Activated T-helper 1 cell treated with anti-CD3 and anti-CD28 coated beads, Interleukin-12 subunit alpha, Interleukin-12 subunit beta, Interleukin-2, Interleukin-4 antibody, amounts not matched to agents 30 ng/mL and 10 ng/mL and 1 ng/mL, durations not matched to agents 14 hours and 24 hours and 36 hours (primary cell): ENCODE measurements at regions of chr20 and their contacts with region 1.

Region 1: DNA sequence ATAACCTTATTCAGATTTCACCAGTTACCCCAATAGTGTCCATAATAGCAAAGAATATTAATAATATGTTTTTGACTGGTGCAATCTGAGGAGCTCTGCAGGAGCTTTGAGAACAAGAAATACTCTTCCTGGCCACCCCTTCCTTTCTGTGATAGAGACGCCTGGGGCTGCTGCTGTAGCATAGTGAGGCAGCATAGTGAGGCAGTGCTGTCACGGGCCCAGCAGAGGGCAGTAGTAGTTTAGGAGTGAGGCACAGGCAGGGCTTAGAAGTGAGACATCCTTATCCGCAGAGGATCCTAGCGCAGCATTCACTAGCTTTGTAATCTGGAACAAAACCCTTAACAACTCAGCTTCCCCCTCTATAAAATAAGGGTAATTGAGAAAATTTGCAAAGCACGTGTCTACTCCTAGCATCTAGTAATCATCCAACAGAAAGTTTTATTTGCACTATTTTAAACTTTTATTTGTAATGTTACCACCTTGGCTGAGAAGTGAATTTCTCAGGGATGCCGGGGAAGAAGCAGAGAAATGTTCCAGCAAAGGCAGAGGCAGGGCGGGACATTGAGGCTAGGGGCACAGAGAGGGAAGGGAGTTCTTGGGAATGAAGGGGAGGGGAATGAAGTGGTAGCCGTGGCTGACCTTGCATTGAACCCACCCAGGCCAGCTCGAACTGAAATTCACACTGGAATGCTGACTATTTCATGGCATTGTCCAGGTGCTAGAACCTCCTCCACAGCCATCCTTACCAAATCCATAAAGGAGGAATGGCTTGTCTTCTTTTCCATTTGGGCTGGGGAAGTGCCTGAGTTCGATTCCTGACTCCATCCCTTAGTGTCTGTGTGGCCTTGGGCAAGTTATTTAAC is 78.8 kb downstream of the CDS2 start:
- DNase-seq: peak; percentile 57
- H3K4me3 Mint-ChIP-seq: no peak overlapping the region
- H3K27ac Mint-ChIP-seq: no peak overlapping the region
- H3K4me1 Mint-ChIP-seq: no peaks in the 10 kb centered on the region
- H3K27me3 Mint-ChIP-seq: no peaks in the 10 kb centered on the region

Region 2: DNA sequence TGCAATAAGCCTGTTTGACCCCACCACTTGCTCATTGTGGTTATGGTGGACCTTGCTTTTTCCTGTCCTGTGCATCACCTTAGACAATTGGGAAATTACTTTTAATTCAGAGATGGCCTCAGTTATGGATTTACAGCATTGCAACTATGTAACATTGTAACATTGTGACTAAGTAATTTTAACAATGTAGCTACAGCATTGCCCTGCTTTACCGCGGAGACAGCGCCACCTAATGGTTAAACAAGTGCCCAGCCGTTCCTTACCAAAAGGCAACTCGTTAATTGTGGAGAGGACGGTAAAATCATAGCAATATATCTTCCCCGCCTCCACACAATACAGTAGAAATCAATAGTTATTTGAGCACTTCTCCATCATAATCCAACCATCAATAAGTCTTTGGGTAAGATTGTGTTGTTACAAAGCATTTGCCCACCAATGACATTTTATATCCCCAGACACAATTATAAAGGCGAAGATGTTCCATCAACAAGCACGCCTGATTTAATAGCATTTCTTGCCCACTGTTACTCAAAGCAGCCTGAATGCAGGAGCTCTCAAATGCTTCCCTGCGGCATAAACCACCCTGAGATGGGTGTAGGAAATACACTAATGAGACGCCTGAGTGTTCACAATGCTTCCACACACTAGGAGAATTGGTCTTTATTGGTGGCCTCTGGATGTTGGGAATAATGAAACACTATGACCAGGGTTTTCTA is 17.5 kb after region 1 on chr20:
- intact Hi-C with region 1: loop called (anchors 1 kb)
- DNase-seq: peak; percentile 30
- H3K4me3 Mint-ChIP-seq: no peak overlapping the region
- H3K27ac Mint-ChIP-seq: no peak overlapping the region
- H3K4me1 Mint-ChIP-seq: no peaks in the 10 kb centered on the region
- H3K27me3 Mint-ChIP-seq: no peaks in the 10 kb centered on the region

Region 3: GRCh38 chr20:5433352-5433751 is 227.8 kb after region 1 on chr20:
- intact Hi-C with region 1: no loop called
- DNase-seq: no peak
- H3K4me3 Mint-ChIP-seq: no peak overlapping the region
- H3K27ac Mint-ChIP-seq: no peak overlapping the region
- H3K4me1 Mint-ChIP-seq: no peaks in the 10 kb centered on the region
- H3K27me3 Mint-ChIP-seq: peaks cover 12% of the 10 kb centered on the region

Region 4: DNA sequence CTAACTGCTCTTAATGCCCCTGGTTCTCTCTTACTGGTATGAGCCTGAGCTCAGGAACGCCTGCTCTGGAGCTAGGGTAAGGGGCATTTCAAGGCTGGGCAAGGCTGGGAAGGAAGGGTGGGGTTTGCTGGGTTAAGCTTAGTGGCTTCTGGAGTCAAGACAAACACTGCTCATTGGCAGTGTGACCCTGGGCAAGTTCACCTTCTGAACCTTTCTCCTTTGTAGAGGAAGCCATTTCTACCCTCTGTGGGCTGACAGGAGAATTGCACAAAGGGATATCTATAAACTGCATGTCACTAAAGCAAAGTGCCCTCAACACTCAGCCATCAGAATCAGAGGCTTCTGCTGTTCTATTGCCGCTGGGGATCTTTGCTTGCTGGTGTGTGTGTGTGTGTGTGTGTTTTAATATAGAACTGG is 868.6 kb after region 1 on chr20:
- intact Hi-C with region 1: loop called (anchors 10 kb)
- DNase-seq: no peak
- H3K4me3 Mint-ChIP-seq: no peak overlapping the region
- H3K27ac Mint-ChIP-seq: no peak overlapping the region
- H3K4me1 Mint-ChIP-seq: no peaks in the 10 kb centered on the region
- H3K27me3 Mint-ChIP-seq: peaks cover 7% of the 10 kb centered on the region